Activated CD4-positive, alpha-beta T cell treated with anti-CD3 and anti-CD28 coated beads for 36 hours (primary cell): ENCODE measurements at regions of chr17 and their contacts with region 1.

Region 1: DNA sequence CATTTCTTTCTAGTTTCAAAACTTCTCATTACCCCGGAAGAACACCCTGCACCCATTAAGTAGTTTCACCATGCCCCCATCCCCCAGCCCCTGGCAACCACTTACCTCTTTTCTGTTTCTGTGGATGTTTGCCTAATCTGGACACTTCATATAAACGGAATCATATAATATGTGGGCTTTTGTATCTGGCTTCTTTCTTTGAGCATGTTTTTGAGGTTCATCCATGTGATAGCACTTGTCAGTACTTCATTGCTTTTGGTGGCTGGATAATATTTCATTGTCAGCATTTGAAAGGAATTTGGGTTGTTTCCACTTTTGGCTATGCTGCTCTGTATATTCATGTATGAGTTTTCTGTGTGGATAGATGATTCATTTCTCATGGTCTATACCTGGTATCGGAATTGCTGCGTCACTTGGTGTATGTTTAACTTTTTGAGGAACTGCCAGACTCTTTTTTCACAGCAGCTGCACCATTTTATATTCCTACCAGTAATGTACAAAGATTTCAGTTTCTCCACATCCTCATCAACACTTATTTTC is 30.0 kb upstream of the SLC5A10 start:
- DNase-seq: peak; percentile 59
- ATAC-seq: peak; percentile 73
- H3K4me3 Mint-ChIP-seq: peak overlapping the region; percentile 22
- H3K27ac Mint-ChIP-seq: peak overlapping the region; percentile 57
- H3K4me1 Mint-ChIP-seq: peaks cover 64% of the 10 kb centered on the region
- H3K27me3 Mint-ChIP-seq: no peaks in the 10 kb centered on the region

Region 2: GRCh38 chr17:18896146-18896545 is 25.8 kb before region 1 on chr17:
- CTCF ChIA-PET with region 1: no interaction called
- POLR2A ChIA-PET with region 1: no interaction called
- intact Hi-C with region 1: loop called (anchors 1 kb)
- DNase-seq: no peak
- ATAC-seq: no peak
- H3K4me3 Mint-ChIP-seq: no peak overlapping the region
- H3K27ac Mint-ChIP-seq: peak overlapping the region; percentile 48
- H3K4me1 Mint-ChIP-seq: peaks cover 21% of the 10 kb centered on the region
- H3K27me3 Mint-ChIP-seq: no peaks in the 10 kb centered on the region